Endothelial cell of umbilical vein (primary cell): ENCODE measurements at regions of chr9 and their contacts with region 1.

Region 1: DNA sequence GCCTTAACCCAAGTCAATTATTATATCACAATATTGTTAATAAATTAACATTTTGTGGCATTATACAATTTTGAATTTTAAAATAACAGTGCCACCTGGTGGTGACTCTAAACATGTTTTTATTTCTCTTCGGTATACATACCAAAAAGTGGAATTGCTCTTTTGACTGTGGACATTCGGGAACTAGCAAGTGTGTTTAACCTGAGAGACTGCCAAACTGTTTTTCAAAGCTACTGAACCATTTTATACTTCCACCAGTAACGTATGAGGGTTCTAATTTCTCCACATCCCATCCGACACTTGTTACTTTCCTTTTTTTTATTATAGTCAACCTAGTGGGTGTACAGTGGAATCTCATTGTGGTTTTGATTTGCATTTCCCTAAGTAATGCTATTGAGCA is 18.3 kb upstream of the HSDL2 start:
- DNase-seq: peak; percentile 55
- H3K4me3 ChIP-seq: no peak overlapping the region
- H3K27ac ChIP-seq: no peak overlapping the region
- H3K4me1 ChIP-seq: peaks cover 4% of the 10 kb centered on the region
- H3K27me3 ChIP-seq: no peaks in the 10 kb centered on the region
- CTCF ChIP-seq: peak in 1 of 2 donors; percentile 10
- POLR2A ChIP-seq: no peak

Region 2: GRCh38 chr9:112086627-112087026 is 275.0 kb before region 1 on chr9:
- CTCF ChIA-PET with region 1: interaction called, 60 read pairs
- POLR2A ChIA-PET with region 1: no interaction called
- dilution Hi-C with region 1: no loop called
- intact Hi-C with region 1: loop called (anchors 1 kb)
- DNase-seq: peak; percentile 48
- H3K4me3 ChIP-seq: no peak overlapping the region
- H3K27ac ChIP-seq: no peak overlapping the region
- H3K4me1 ChIP-seq: peaks cover 10% of the 10 kb centered on the region
- H3K27me3 ChIP-seq: no peaks in the 10 kb centered on the region
- CTCF ChIP-seq: peak; percentile 21 to 34
- POLR2A ChIP-seq: no peak

Region 3: GRCh38 chr9:112091810-112092209 is 269.8 kb before region 1 on chr9:
- CTCF ChIA-PET with region 1: interaction called, 81 read pairs
- POLR2A ChIA-PET with region 1: no interaction called
- dilution Hi-C with region 1: no loop called
- intact Hi-C with region 1: loop called (anchors 1 kb)
- DNase-seq: peak; percentile 13
- H3K4me3 ChIP-seq: no peak overlapping the region
- H3K27ac ChIP-seq: no peak overlapping the region
- H3K4me1 ChIP-seq: no peaks in the 10 kb centered on the region
- H3K27me3 ChIP-seq: no peaks in the 10 kb centered on the region
- CTCF ChIP-seq: peak in 1 of 2 donors; percentile 15
- POLR2A ChIP-seq: no peak

Region 4: DNA sequence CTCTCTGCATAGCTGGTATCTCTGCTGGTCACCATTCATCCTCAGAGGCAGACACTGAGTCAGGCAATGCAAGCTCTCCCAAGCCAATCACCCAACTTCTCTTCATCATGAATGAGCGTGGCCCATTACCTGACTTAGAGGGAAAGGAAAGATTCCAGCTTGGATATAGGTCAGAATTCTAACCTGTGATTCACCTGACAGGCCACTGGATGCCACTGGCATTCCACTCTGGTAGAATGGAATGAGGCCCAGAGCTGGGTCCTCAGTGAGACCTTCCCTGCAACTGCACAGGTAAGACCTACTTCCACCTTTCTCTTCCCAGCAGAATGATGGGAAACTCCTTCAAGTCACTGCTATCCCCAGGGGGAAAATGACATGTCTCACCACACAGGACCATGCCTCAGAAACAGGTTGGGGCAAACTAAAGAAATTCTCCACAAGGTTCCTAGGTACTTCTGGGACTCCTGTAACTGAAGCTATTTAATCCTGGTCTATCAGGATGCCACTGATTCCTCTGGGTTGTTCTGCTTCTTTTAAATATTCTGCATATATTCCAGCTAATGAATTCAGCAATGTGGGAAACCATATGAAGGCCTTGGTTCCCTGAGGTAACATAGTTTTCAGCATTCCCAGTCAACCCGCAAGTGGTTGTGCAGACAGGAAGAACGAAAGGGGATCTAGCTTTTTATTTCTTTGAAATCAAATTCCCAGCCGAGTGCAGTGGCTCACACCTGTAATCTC is 248.5 kb before region 1 on chr9:
- CTCF ChIA-PET with region 1: interaction called, 36 read pairs
- POLR2A ChIA-PET with region 1: no interaction called
- dilution Hi-C with region 1: no loop called
- intact Hi-C with region 1: loop called (anchors 1 kb)
- DNase-seq: no peak
- H3K4me3 ChIP-seq: no peak overlapping the region
- H3K27ac ChIP-seq: peak overlapping the region; percentile 48
- H3K4me1 ChIP-seq: peaks cover 13% of the 10 kb centered on the region
- H3K27me3 ChIP-seq: no peaks in the 10 kb centered on the region
- CTCF ChIP-seq: peak; percentile 27 to 28
- POLR2A ChIP-seq: no peak

Region 5: DNA sequence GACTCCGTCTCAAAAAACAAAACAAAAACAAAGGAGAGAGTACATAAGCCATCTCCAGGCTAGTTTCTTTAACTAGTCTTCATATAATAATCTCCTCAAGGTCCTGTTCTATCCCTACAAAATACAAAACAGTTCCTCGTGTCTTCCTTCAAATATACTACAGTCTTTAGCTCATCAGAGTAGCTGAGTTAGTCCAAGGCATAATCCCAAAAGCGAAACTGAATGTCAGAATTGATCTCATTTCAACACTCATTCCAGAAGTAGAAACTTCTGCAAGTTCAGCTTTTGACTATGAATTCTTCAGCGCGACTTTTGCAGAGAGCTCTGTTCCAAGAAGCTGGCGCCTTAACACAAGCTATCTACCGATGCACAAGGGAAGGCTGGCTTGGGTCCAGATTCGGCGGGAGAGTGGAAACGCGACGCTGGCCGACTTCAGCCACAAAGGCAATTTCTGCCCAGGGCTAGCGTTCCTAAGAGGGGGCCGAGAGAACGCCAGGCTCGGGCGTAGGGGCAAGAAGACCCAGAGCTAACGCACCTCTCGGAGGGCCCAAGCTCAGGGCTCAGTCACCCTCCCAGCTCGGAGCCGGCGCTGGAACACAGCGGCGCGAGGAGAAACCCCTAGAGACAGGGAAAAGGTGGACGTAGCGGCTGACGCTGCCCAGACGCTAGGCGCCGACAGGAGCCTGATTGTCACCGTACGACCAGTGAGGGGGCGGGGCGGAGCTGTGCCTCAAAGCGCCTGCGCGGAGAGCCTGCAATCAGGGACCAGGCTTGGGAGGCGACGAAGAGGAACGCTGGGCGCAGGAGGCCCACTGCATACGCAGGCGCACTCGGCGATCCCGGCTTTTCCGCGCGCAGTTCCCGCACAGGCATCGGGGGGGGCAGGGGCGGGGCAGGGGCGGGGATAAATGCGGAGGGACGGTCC is 17.8 kb after region 1 on chr9:
- CTCF ChIA-PET with region 1: interaction called, 11 read pairs
- POLR2A ChIA-PET with region 1: interaction called, 4 read pairs
- dilution Hi-C with region 1: no loop called
- intact Hi-C with region 1: no loop called
- DNase-seq: peak; percentile 99
- H3K4me3 ChIP-seq: peak overlapping the region; percentile 79 to 98 (median 87)
- H3K27ac ChIP-seq: peak overlapping the region; percentile 94
- H3K4me1 ChIP-seq: peaks cover 16% of the 10 kb centered on the region
- H3K27me3 ChIP-seq: no peaks in the 10 kb centered on the region
- CTCF ChIP-seq: peak in 1 of 2 donors; percentile 5
- POLR2A ChIP-seq: peak; percentile 96

Region 6: DNA sequence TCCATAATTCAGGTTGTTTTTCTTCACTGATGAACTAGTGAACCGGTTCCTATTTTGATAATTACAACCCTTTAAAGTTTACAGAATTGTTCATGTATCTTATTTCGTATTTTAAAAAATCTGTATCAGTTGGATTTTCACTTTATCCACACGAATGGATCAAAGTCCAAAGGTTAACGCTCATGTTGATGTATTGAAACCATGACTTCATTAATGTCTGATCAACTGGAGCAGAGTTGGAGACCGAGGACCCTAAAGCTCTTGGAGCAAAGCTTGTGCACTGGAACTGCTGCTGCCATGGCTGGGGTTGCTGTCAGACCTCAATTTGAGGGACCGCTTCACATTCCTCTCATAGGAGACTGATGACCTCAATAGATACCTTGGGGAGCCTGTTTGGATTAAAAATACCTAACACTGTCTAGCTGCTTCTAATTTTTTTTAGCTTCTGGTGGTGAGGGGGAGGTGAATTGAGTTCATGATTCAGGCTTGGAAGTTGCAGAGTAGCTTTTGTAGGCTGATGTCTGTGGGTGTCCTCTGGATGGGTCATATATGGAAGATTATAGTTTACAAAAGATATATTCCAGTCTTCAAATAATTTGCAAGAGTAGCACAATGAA is 170.2 kb after region 1 on chr9:
- CTCF ChIA-PET with region 1: no interaction called
- POLR2A ChIA-PET with region 1: no interaction called
- dilution Hi-C with region 1: no loop called
- intact Hi-C with region 1: no loop called
- DNase-seq: no peak
- H3K4me3 ChIP-seq: no peak overlapping the region
- H3K27ac ChIP-seq: no peak overlapping the region
- H3K4me1 ChIP-seq: peaks cover 11% of the 10 kb centered on the region
- H3K27me3 ChIP-seq: no peaks in the 10 kb centered on the region
- CTCF ChIP-seq: no peak
- POLR2A ChIP-seq: no peak